Transverse colon (tissue), 4 donors: ENCODE measurements at regions of chr14 and their contacts with region 1.

Region 1: GRCh38 chr14:22536853-22537338 is 52.1 kb downstream of the DAD1 start:
- DNase-seq: peak; percentile 48
- H3K4me3 ChIP-seq: no peak overlapping the region
- H3K27ac ChIP-seq: peak overlapping the region; percentile 53 to 73 (median 64)
- H3K4me1 ChIP-seq: peaks cover 0 to 12% (median 3%) of the 10 kb centered on the region in 4 donors
- H3K27me3 ChIP-seq: no peaks in the 10 kb centered on the region
- CTCF ChIP-seq: no peak
- EP300 ChIP-seq: no peak
- POLR2A ChIP-seq: no peak

Region 2: DNA sequence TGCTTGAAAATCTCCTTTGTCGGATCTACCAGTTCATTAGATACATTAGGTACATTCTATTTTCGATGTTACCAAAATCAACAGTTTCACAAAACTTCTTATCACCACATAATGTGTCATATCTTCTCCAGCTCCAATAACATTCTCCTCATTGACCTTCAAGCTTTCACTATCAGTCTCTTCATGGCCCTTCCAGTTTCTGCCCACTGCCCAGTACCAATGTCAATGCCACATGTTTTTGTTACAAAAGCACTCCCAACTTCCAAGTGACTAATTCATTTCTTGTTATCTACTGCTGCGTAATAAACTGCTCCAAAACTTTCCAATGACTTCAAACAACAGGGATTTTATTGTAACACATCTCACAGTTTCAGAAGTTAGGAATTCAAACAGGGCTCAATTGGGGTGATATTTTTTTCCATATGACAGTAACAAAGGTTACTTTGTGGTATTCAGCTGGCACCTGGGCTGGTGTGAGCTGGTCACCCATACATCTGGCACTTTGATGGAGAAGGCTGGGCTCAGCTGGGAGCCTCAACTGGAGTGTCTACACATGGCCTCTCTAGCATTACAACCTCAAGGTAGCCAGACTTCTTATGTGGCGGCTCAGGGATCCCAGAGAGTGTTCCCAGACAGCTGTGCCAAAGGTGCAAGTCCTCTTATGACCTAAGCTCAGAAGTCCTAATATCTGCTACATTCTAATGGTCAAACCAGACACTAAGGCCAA is 1387.1 kb before region 1 on chr14:
- in situ Hi-C with region 1: no loop called
- intact Hi-C with region 1: loop called (anchors 10 kb)
- DNase-seq: no peak
- H3K4me3 ChIP-seq: no peak overlapping the region
- H3K27ac ChIP-seq: no peak overlapping the region
- H3K4me1 ChIP-seq: no peaks in the 10 kb centered on the region
- H3K27me3 ChIP-seq: peaks cover under 1% of the 10 kb centered on the region
- CTCF ChIP-seq: no peak
- EP300 ChIP-seq: no peak
- POLR2A ChIP-seq: no peak

Region 3: GRCh38 chr14:23154964-23155587 is 618.2 kb after region 1 on chr14:
- in situ Hi-C with region 1: no loop called
- intact Hi-C with region 1: no loop called
- DNase-seq: peak; percentile 61
- H3K4me3 ChIP-seq: no peak overlapping the region
- H3K27ac ChIP-seq: peak overlapping the region; percentile 77 to 92 (median 82)
- H3K4me1 ChIP-seq: peaks cover 10 to 32% (median 22%) of the 10 kb centered on the region in 4 donors
- H3K27me3 ChIP-seq: no peaks in the 10 kb centered on the region
- CTCF ChIP-seq: no peak
- EP300 ChIP-seq: no peak
- POLR2A ChIP-seq: peak; percentile 22